Natural killer cell (primary cell): ENCODE measurements at regions of chr11 and their contacts with region 1.

Region 1: DNA sequence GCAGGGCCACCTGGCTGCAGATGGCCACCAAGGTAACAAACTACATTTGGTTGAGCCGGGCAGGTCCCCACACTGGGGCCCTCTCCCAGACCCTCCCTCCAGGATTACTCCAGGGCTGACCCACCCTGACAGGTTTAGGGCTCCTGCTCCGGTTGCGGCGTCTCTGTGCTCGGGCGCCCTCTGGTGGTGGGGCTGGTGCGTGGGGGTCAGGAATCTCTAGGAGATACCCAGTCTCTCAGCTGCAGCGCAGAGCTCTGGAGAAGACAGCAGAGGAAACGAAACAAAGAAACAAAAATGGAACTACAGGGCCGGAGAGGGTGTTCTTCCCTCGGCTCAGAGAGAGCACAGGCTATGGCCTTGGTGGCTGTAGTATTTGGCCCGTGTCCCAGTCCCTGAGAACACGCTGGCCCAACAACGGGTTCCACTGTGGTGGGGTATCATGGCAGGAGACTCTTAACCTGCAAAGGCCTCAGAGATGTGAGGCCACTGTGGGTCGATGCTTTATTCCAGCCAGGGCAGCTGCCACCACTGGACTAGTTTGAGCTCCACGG is 2.4 kb downstream of the C11orf96 start:
- DNase-seq: peak; percentile 59 to 62
- ATAC-seq: peak; percentile 48 to 49 (median 48)
- H3K4me3 ChIP-seq: no peak overlapping the region
- H3K4me3 Mint-ChIP-seq: peak overlapping the region; percentile 65
- H3K27ac ChIP-seq: no peak overlapping the region
- H3K27ac Mint-ChIP-seq: no peak overlapping the region
- H3K4me1 ChIP-seq: peaks cover 27% of the 10 kb centered on the region
- H3K4me1 Mint-ChIP-seq: peaks cover 20 to 35% of the 10 kb centered on the region in 2 donors
- H3K27me3 ChIP-seq: peaks cover 23% of the 10 kb centered on the region
- H3K27me3 Mint-ChIP-seq: peaks cover 47 to 55% of the 10 kb centered on the region in 2 donors
- CTCF ChIP-seq: peak; percentile 71

Region 2: DNA sequence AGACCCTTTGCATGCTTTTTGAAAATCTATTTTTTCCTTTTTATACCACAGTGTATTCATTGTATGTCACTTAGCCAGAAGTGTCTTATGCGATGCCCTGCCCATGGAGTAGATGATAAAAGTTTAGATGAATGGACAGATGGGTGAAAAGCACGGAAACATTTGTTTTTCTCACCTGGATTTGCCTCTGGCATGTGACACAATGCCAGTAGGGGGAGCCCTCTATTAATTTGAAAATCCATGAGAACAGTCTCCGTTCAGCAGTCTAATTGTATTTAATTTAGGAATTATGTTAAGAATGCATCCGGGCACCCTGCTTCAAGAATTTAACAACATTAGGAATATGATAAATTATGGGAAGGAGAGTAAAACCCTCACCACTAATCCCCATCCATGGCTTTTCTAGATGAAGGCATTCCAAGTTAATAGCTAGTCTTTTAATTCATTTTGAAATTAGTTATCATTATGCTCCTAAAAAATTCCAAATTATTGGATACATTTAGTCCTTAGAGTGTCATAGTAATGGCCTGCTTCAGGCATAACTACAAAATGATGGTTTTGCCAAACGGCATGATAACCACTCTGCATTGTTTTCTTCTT is 119.5 kb before region 1 on chr11:
- intact Hi-C with region 1: loop called (anchors 2 kb)
- DNase-seq: peak in 1 of 2 donors; percentile 36
- ATAC-seq: no peak
- H3K4me3 ChIP-seq: no peak overlapping the region
- H3K4me3 Mint-ChIP-seq: no peak overlapping the region
- H3K27ac ChIP-seq: no peak overlapping the region
- H3K27ac Mint-ChIP-seq: no peak overlapping the region
- H3K4me1 ChIP-seq: no peaks in the 10 kb centered on the region
- H3K4me1 Mint-ChIP-seq: no peaks in the 10 kb centered on the region
- H3K27me3 ChIP-seq: no peaks in the 10 kb centered on the region
- H3K27me3 Mint-ChIP-seq: no peaks in the 10 kb centered on the region
- CTCF ChIP-seq: peak; percentile 73

Region 3: GRCh38 chr11:43895601-43896000 is 49.2 kb before region 1 on chr11:
- intact Hi-C with region 1: loop called (anchors 2 kb)
- DNase-seq: no peak
- ATAC-seq: no peak
- H3K4me3 ChIP-seq: no peak overlapping the region
- H3K4me3 Mint-ChIP-seq: no peak overlapping the region
- H3K27ac ChIP-seq: no peak overlapping the region
- H3K27ac Mint-ChIP-seq: peak overlapping the region in 1 of 2 donors; percentile 71
- H3K4me1 ChIP-seq: no peaks in the 10 kb centered on the region
- H3K4me1 Mint-ChIP-seq: peaks cover 11 to 15% of the 10 kb centered on the region in 2 donors
- H3K27me3 ChIP-seq: no peaks in the 10 kb centered on the region
- H3K27me3 Mint-ChIP-seq: no peaks in the 10 kb centered on the region
- CTCF ChIP-seq: no peak

Region 4: GRCh38 chr11:43933608-43934551 is 11.0 kb before region 1 on chr11:
- intact Hi-C with region 1: no loop called
- DNase-seq: no peak
- ATAC-seq: no peak
- H3K4me3 ChIP-seq: no peak overlapping the region
- H3K4me3 Mint-ChIP-seq: no peak overlapping the region
- H3K27ac ChIP-seq: no peak overlapping the region
- H3K27ac Mint-ChIP-seq: no peak overlapping the region
- H3K4me1 ChIP-seq: peaks cover 16% of the 10 kb centered on the region
- H3K4me1 Mint-ChIP-seq: peaks cover 12 to 17% of the 10 kb centered on the region in 2 donors
- H3K27me3 ChIP-seq: no peaks in the 10 kb centered on the region
- H3K27me3 Mint-ChIP-seq: peaks cover 0 to 9% of the 10 kb centered on the region in 2 donors
- CTCF ChIP-seq: no peak